B cell (primary cell): ENCODE measurements at regions of chr20 and their contacts with region 1.

Region 1: DNA sequence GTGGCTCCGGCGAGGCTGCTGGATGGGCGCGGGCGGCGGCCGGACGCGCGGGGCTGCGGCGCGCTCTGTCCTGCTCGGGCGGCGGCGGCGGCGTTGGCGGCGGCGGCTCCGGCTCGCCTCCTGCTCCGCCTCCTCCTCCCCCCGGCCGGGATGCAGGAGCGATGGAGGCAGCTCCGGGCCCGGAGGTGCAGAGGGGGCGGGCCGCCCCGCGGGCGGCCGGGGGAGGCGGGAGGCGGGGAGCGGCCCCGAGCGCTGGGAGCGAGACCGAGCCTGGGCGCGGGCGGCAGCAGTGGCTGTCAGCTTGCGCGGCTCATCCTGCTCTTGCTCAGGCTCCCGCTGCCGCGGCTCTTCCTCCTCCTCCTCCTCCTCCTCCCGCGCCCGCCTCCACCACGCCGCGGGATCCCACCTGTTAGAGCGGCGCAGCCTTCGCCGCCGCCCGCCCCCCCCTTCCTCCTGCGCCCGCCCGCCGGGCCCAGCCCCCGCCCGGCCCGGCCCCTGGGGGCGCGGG is at the start of gene NOL4L:
- DNase-seq: peak; percentile 45
- ATAC-seq: peak; percentile 16
- H3K4me3 ChIP-seq: peak within 1 kb of the TSS; percentile 41 to 70 (median 61)
- H3K4me3 Mint-ChIP-seq: peak within 1 kb of the TSS; percentile 87
- H3K27ac ChIP-seq: no peak within 1 kb of the TSS
- H3K27ac Mint-ChIP-seq: peak within 1 kb of the TSS; percentile 85
- H3K4me1 ChIP-seq: peaks cover 29 to 40% of the 10 kb centered on the region in 2 donors
- H3K4me1 Mint-ChIP-seq: peaks cover 30% of the 10 kb centered on the region
- H3K27me3 ChIP-seq: peaks cover 0 to 10% (median 5%) of the 10 kb centered on the region in 4 experiments
- H3K27me3 Mint-ChIP-seq: peaks cover 4% of the 10 kb centered on the region
- CTCF ChIP-seq: no peak
- total RNA-seq, gene NOL4L: 6.5 and 7.6 TPM in 2 replicates

Region 2: DNA sequence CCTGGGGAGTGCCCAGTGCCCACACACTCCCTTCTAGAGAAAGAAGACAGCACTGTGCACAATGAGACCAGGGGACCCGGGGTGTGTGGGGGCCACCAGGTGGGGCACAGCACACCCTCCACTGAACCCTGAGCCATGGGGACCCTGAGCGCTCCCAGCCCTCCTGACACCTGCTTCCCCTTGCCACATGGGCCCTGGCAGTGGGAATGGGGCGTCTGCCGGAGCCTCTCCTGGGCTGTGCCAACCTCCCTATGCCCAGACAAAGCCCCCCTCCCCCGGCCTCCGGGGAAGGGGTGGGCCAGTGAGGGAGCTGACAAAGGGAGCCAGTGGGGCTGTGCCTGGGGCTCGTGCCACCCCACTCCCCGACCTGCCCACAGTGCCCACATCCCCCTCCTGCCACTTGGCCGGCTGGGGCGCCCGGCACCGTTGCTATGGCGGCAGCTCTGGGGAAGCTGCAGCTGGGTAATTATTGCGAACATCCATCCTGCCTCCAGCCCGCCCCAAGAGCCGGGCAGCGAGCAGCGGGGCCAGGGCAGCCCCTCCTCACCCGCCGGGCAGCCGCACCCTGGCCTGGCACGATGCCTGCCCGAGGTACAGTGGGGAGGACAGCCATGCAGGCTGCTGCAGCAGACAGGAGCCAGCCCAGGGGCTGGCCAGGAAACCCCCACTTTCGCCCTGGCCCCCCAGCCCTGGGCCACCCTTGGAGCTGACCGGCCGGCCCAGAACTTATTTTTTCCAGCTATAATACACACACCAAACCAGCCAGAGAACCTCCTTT is 42.0 kb after region 1 on chr20:
- CTCF ChIA-PET with region 1: no interaction called
- POLR2A ChIA-PET with region 1: no interaction called
- intact Hi-C with region 1: loop called (anchors 5 kb)
- DNase-seq: peak; percentile 42
- ATAC-seq: peak; percentile 46
- H3K4me3 ChIP-seq: peak overlapping the region in 4 of 5 experiments; percentile 6 to 44 (median 18)
- H3K4me3 Mint-ChIP-seq: peak overlapping the region; percentile 74
- H3K27ac ChIP-seq: peak overlapping the region in 1 of 2 donors; percentile 23
- H3K27ac Mint-ChIP-seq: peak overlapping the region; percentile 32
- H3K4me1 ChIP-seq: peaks cover 19% of the 10 kb centered on the region in 2 donors
- H3K4me1 Mint-ChIP-seq: peaks cover 11% of the 10 kb centered on the region
- H3K27me3 ChIP-seq: peaks cover 0 to 5% (median 2%) of the 10 kb centered on the region in 4 experiments
- H3K27me3 Mint-ChIP-seq: no peaks in the 10 kb centered on the region
- CTCF ChIP-seq: no peak

Region 3: GRCh38 chr20:32674362-32674789 is 89.3 kb after region 1 on chr20:
- CTCF ChIA-PET with region 1: no interaction called
- POLR2A ChIA-PET with region 1: no interaction called
- intact Hi-C with region 1: no loop called
- DNase-seq: peak; percentile 58
- ATAC-seq: no peak
- H3K4me3 ChIP-seq: no peak overlapping the region
- H3K4me3 Mint-ChIP-seq: peak overlapping the region; percentile 0
- H3K27ac ChIP-seq: no peak overlapping the region
- H3K27ac Mint-ChIP-seq: no peak overlapping the region
- H3K4me1 ChIP-seq: peaks cover 23 to 26% of the 10 kb centered on the region in 2 donors
- H3K4me1 Mint-ChIP-seq: peaks cover 36% of the 10 kb centered on the region
- H3K27me3 ChIP-seq: no peaks in the 10 kb centered on the region
- H3K27me3 Mint-ChIP-seq: no peaks in the 10 kb centered on the region
- CTCF ChIP-seq: peak; percentile 72